ENCODE measurements at regions of chr2 and their contacts with region 1.

Region 1: GRCh38 chr2:15939854-15940660 is at the start of gene MYCN:
- DNase-seq: peak; percentile 86 to 92 (median 92)
- H3K4me3 ChIP-seq: peak within 1 kb of the TSS; percentile 82 to 99 (median 95)
- H3K27ac ChIP-seq: peak within 1 kb of the TSS; percentile 43 to 50
- H3K4me1 ChIP-seq: peaks cover 11 to 35% (median 25%) of the 10 kb centered on the region in 4 experiments
- H3K27me3 ChIP-seq: peaks cover 0 to 2% (median 0%) of the 10 kb centered on the region in 5 experiments

Region 2: DNA sequence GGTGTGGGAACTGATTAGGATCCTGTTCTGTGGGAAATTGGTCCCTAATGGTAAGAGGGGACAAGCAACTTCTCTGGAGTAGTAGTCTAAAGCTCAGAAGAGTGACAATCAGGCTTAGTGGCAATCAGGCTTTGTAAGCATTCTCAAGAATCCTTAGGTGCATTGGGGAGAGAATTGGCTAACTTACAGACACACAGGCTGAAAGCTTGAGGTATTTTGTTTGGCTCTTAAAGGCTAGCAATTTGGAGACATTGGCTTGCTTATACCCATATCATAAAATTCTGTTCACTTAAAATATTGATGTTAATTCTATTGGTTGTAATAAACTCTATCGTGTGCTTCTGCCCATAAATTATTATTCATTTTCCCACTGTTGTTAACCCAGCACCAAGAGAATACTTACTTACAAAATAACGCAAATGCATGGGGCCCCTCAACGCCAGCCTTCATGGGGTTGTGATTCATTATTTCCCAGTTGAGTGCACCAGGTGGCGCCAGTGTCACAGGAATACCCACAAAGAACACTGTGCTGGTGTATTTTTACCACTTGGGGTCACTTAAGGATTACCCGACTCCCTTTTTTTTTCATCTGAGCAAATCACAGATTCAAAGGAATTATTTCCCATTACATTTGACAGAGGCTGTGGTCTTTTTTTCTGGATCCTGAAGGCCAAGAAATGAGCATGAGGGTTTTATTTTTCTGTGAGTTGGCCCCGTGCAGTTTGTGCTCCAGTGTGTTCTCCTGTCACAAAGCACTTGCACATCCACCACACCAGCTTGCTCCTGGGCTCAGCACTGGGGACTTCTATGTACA is 302.9 kb before region 1 on chr2:
- CTCF ChIA-PET with region 1: interaction called, 16 read pairs
- POLR2A ChIA-PET with region 1: no interaction called
- DNase-seq: peak; percentile 77 to 86 (median 79)
- H3K4me3 ChIP-seq: no peak overlapping the region
- H3K27ac ChIP-seq: no peak overlapping the region
- H3K4me1 ChIP-seq: peaks cover 0 to 15% (median 11%) of the 10 kb centered on the region in 4 experiments
- H3K27me3 ChIP-seq: no peaks in the 10 kb centered on the region

Region 3: GRCh38 chr2:15858466-15858865 is 81.6 kb before region 1 on chr2:
- CTCF ChIA-PET with region 1: no interaction called
- POLR2A ChIA-PET with region 1: no interaction called
- DNase-seq: no peak
- H3K4me3 ChIP-seq: no peak overlapping the region
- H3K27ac ChIP-seq: no peak overlapping the region
- H3K4me1 ChIP-seq: no peaks in the 10 kb centered on the region
- H3K27me3 ChIP-seq: peaks cover 0 to 2% (median 0%) of the 10 kb centered on the region in 5 experiments

Region 4: GRCh38 chr2:16438613-16439321 is 498.7 kb after region 1 on chr2:
- CTCF ChIA-PET with region 1: interaction called, 5 read pairs
- POLR2A ChIA-PET with region 1: interaction called, 12 read pairs
- DNase-seq: peak; percentile 95 to 99 (median 98)
- H3K4me3 ChIP-seq: peak overlapping the region in 3 of 7 experiments; percentile 3 to 46 (median 6)
- H3K27ac ChIP-seq: peak overlapping the region; percentile 88 to 92
- H3K4me1 ChIP-seq: peaks cover 33 to 89% (median 86%) of the 10 kb centered on the region in 4 experiments
- H3K27me3 ChIP-seq: no peaks in the 10 kb centered on the region

Region 5: GRCh38 chr2:16496426-16497388 is 556.6 kb after region 1 on chr2:
- CTCF ChIA-PET with region 1: interaction called, 80 read pairs
- POLR2A ChIA-PET with region 1: no interaction called
- DNase-seq: no peak
- H3K4me3 ChIP-seq: no peak overlapping the region
- H3K27ac ChIP-seq: no peak overlapping the region
- H3K4me1 ChIP-seq: peaks cover 6 to 27% (median 21%) of the 10 kb centered on the region in 4 experiments
- H3K27me3 ChIP-seq: no peaks in the 10 kb centered on the region

Region 6: DNA sequence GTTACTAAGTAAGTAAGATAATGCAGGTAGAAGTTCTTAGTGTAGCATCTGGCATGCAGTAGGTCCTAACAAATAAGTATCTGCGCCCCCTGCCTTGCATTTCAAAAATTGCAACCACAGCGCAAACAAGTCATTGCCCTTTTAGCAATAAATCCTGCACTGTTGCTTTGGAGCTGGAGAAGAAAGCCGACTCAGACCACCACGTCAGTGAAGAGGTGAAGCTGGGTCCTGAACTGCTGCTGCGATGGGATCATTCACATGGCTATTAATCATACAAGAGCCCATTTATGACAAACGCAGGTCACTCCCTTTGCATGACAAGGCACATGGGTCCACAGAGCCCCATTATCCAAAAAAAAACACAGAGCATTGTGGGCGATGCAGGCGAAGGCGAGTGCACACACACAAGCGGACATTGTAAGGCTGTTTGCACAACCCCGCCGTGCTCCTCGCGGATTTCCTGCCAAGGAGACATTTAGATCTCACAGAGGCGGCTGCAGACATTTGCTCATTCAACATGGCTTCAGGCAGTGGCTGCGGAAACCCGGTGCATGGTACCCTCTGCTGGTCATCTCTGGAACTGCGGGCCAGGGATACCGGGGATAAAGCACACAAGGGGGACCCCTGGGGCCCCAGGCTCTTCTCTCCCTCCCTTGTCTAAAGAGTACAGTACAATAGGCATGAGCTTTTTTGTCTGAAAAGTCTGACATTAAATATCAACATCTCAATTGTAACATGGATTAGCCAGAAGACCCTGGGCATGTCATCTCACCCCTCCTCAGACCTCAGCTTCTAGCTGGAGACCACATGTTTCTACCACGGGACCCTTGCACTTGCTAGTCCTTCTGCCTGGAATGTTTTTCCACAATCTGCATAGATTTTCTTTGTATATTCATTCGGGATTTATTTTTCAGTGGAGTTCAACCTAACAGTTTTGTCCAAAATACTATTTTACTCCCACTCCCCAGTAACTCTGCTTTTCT is 668.9 kb after region 1 on chr2:
- CTCF ChIA-PET with region 1: interaction called, 15 read pairs
- POLR2A ChIA-PET with region 1: no interaction called
- DNase-seq: peak; percentile 81 to 91 (median 88)
- H3K4me3 ChIP-seq: peak overlapping the region; percentile 40 to 85 (median 71)
- H3K27ac ChIP-seq: no peak overlapping the region
- H3K4me1 ChIP-seq: peaks cover 0 to 4% (median 2%) of the 10 kb centered on the region in 4 experiments
- H3K27me3 ChIP-seq: no peaks in the 10 kb centered on the region

Measured in common myeloid progenitor, CD34-positive (primary cell).